ENCODE measurements at regions of chr16 and their contacts with region 1.

Region 1: DNA sequence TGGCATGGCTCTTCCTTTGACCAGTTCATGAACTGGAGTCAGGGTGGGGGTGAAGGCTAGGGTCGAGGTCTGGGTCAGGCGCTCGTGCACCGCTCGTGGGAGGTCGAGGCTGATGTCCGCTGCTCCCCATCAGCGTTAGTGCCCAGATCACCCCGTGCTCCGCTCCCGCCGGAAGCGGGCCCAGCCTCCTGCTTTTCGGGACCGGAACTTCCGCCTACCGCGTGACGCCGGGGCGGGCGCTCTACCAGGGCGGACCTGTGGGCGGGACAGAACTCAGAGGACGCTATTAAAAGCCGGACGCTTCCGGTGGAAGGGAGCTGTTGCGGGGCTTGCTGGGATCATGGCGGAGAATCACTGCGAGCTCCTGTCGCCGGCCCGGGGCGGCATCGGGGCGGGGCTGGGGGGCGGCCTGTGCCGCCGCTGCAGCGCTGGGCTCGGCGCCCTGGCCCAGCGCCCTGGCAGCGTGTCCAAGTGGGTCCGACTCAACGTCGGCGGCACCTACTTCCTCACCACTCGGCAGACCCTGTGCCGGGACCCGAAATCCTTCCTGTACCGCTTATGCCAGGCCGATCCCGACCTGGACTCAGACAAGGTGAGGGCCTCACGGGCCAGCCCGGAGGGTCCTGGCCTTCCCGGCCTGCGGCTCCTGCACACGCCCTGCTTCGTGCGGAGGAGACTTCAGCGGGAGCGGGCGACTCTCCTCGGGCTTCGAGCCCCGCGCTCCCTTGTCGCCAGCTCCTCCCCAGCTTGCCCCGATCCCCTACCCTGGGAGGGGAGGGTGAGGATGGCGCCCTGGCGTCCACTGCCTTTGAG is at the start of gene KCTD5:
- DNase-seq: peak; percentile 93
- ATAC-seq: peak; percentile 85
- H3K4me3 Mint-ChIP-seq: peak within 1 kb of the TSS; percentile 96
- H3K27ac Mint-ChIP-seq: peak within 1 kb of the TSS; percentile 92
- H3K4me1 Mint-ChIP-seq: peaks cover 31% of the 10 kb centered on the region
- H3K27me3 Mint-ChIP-seq: no peaks in the 10 kb centered on the region
- CTCF ChIP-seq: no peak
- total RNA-seq, gene KCTD5: 30.3 and 31.4 TPM in 2 replicates

Region 2: DNA sequence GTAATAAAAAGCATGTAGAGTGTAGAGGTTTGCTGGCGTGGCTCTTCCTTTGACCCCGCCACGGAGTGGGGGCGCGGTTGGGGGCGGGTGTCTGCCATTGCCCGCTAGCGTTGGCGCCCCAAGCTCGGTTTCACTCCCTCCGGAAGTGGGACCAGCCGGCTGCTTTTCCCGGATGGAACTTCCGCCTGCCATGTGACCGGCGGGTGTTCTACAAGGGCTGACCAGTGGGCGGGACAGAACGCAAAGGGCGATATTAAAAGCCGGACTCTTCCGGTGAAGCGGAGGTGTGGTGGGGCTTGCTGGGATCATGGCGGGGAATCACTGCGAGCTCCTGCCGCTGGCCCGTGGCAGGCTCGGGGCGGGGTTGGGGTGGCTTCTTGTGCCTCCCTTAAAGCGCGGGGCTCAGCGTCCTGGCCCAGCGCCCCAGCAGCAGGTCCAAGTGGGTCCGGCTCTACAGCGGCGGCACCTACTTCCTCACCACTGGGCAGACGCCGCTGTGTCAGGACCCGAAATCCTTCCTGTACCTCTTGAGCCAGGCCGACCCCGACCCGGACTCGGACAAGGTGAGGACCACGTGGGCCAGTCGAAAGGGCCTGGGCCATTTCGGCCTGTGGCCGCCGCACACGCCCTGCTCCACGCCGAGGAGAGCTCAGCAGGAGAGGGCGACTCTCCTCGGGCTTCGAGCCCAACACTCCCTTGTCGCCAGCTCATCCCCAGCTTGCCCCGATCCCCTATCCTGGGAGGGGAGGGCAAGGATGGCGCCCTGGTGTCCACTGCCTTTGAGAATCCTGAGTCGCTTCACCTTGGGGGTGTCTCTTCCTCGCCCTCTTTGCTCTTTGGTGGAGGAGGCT is 79.0 kb before region 1 on chr16:
- CTCF ChIA-PET with region 1: no interaction called
- POLR2A ChIA-PET with region 1: interaction called, 11 read pairs
- intact Hi-C with region 1: no loop called
- DNase-seq: peak; percentile 75
- ATAC-seq: peak; percentile 47
- H3K4me3 Mint-ChIP-seq: peak overlapping the region; percentile 94
- H3K27ac Mint-ChIP-seq: peak overlapping the region; percentile 86
- H3K4me1 Mint-ChIP-seq: peaks cover 27% of the 10 kb centered on the region
- H3K27me3 Mint-ChIP-seq: no peaks in the 10 kb centered on the region
- CTCF ChIP-seq: no peak

Measured in activated B cell treated with CpG ODN at 0.5 μM for 24 hours (primary cell).